ENCODE measurements at regions of chr5 and their contacts with region 1.

Region 1: DNA sequence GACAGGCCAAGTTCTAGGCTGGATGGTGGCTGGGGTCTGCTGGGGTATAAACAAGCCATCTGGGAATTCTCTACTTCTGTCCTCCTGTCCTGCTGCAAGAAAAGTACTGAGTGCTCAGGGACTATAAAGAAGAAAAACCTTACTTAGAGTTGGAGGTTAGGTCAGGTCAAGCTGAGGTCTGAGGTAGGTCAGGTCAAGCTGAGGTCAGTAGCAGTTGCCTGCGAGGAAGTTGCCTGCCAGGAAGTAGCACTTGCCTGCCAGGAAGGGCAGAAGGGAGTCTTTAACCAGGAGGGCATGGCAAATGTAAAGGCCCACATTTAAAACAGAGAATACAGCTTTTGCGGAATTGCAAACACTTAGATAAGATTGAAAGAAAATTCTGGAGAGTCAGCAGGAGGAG is 51.3 kb upstream of the PRLR start:
- DNase-seq: no peak
- H3K4me3 Mint-ChIP-seq: no peak overlapping the region
- H3K27ac Mint-ChIP-seq: no peak overlapping the region
- H3K4me1 Mint-ChIP-seq: no peaks in the 10 kb centered on the region
- H3K27me3 Mint-ChIP-seq: peaks cover 2% of the 10 kb centered on the region

Region 2: DNA sequence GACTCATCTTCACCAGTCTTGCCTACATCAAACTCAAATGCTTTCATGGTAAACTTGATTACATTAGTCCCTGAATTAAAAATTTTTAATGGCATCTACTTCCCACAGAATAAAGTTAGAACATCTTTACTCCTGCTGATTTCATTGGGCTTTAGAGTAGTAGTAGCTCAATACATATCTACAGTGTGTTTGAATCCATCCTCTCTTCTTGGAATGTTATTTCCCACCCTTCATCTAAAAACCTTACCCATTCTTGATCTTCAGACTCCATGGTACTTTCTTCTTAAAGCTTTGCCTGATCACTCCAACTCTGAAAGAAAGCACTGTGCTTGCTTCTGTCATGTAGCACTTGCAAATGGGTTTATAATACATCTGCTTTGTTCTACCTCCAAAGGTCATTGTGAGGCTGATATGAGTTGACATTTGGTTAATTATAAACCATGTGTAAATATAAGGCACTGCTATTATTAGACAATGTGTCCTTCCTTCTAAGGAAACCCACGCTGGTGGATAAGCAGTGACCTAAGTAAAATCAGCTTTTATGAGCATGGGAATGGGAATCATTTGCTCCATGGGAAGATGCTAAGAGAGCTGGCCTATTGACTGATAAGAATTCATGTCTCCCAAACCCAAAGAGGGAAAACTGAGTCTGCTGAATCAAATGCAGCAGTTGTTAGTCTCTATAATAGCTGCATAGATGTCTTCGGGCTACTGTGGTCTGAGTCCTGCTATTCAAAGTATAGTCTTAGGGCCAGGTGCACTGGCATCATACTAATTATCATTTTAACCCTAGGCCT is 43.8 kb before region 1 on chr5:
- intact Hi-C with region 1: no loop called
- DNase-seq: no peak
- H3K4me3 Mint-ChIP-seq: no peak overlapping the region
- H3K27ac Mint-ChIP-seq: no peak overlapping the region
- H3K4me1 Mint-ChIP-seq: no peaks in the 10 kb centered on the region
- H3K27me3 Mint-ChIP-seq: peaks cover 4% of the 10 kb centered on the region

Region 3: DNA sequence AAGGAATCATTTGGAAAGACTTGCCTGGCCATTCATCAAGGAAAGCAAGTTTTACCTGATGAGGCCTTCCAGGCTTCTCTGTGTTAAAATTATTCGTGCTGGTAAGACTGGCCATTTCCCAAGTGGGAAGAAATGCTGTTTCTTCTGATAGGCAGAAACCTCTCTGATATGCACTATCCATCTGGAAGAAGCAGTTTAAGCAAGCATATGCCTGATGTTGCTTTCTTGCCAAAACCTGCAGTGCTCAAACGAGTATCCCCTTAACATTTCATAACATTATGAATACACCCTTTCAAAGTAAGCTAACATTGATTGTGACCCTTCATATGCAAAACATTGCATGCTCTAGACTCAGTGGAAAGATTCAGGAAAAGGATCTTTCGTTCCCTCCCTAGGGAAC is 15.3 kb before region 1 on chr5:
- intact Hi-C with region 1: loop called (anchors 2 kb)
- DNase-seq: no peak
- H3K4me3 Mint-ChIP-seq: no peak overlapping the region
- H3K27ac Mint-ChIP-seq: no peak overlapping the region
- H3K4me1 Mint-ChIP-seq: no peaks in the 10 kb centered on the region
- H3K27me3 Mint-ChIP-seq: no peaks in the 10 kb centered on the region

Region 4: GRCh38 chr5:35331956-35332950 is 50.6 kb after region 1 on chr5:
- intact Hi-C with region 1: no loop called
- DNase-seq: no peak
- H3K4me3 Mint-ChIP-seq: no peak overlapping the region
- H3K27ac Mint-ChIP-seq: no peak overlapping the region
- H3K4me1 Mint-ChIP-seq: no peaks in the 10 kb centered on the region
- H3K27me3 Mint-ChIP-seq: no peaks in the 10 kb centered on the region